HCT116 (cell line): ENCODE measurements at regions of chr12 and their contacts with region 1.

Region 1: DNA sequence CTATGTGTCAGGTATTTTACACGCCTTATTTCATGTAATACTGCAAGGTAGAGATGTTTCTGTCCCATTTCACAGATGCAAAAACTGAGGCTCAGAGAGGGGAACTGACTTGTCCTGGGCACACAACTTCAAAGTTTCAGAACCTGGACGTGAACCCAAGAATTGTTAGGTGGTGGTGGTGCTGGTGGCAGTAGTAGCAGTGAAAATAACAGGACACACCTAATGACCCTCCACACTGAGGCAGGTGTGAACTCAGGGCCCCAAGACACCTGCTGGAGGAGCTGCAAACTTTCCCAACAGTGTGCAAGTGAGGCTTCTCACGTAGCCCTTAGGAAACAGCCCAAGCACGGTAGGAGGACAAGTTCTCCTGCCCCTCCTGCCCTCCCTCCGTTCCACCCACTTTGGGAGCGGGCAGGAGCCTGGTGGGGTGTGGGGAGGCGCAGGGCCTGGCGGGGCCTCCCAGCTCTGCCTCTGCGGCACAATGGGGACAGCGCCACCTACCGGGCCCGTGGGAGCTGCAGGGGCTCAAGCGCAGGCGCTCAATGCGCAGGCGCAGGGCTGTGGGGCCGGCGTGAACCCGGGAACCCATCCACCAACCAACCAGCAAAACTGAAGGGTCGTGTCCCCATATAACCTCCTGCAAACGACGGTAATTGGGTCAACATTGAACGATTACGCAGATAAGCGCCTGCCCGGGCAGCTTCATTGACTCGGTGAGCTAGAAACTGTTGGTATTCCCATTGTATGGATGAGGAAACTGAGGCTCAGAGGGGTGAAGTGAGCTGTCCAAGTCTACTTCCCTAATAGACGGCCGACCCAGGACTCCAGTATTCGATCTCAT is 12.0 kb upstream of the TRPV4 start:
- DNase-seq: peak; percentile 73
- ATAC-seq: peak; percentile 92
- H3K4me3 ChIP-seq: no peak overlapping the region
- H3K27ac ChIP-seq: no peak overlapping the region
- H3K4me1 ChIP-seq: peaks cover 12 to 21% of the 10 kb centered on the region in 2 experiments; a peak in 3 of 4 replicates
- H3K27me3 ChIP-seq: no peaks in the 10 kb centered on the region
- CTCF ChIP-seq: peak; percentile 97 to 98 (median 98)
- POLR2A ChIP-seq: no peak
- RAD21 ChIP-seq: peak; percentile 94

Region 2: DNA sequence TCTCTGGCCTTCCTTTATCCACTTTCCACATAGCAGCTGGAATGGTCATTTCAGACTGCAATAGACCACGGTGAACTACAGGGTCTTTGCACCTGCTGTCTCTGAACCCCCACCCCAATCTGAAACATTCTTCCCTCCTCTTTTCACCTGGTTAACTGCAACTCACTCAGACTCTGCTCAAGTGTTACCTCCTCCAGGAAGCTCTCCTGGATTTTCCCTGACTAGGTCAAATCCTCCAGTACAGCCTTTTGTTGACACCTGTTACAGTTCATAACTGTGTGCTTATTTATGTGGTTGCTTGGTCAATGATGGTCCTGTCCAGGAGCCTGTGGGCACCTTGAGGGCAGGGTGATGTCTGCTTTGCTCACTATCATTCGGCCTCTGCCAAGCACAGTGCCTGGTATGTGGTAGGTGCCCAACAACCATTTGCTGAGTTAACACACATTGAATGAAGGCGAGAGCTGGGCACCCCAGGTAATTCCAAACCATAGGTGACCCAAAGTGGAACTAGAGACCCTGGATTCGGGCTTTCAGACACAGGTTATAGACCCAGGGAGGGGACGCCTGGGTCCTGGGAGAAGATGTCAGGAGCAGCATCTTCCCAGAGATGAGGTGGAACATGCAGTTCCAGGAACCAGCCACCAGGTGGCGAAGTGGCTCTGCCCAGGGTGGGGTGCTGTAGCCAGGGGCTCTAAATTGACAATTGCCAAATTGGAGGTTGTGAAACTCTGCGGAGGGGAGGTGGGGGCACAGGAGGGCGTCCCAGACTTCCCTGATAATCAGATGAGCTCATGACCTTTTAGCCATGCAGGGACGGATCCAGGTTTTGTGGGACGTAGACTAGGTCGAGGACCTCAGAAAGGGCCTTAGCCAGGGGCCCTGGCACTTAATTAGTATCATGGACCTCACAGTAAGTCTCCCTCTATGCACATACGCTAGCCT is 40.1 kb before region 1 on chr12:
- CTCF ChIA-PET with region 1: interaction called, 19 read pairs
- POLR2A ChIA-PET with region 1: no interaction called
- RAD21 ChIA-PET with region 1: no interaction called
- intact Hi-C with region 1: loop called (anchors 1 kb)
- DNase-seq: peak; percentile 15
- ATAC-seq: peak; percentile 95
- H3K4me3 ChIP-seq: no peak overlapping the region
- H3K27ac ChIP-seq: no peak overlapping the region
- H3K4me1 ChIP-seq: no peaks in the 10 kb centered on the region
- H3K27me3 ChIP-seq: no peaks in the 10 kb centered on the region
- CTCF ChIP-seq: peak; percentile 94 to 98 (median 96)
- POLR2A ChIP-seq: no peak
- RAD21 ChIP-seq: peak; percentile 92

Region 3: DNA sequence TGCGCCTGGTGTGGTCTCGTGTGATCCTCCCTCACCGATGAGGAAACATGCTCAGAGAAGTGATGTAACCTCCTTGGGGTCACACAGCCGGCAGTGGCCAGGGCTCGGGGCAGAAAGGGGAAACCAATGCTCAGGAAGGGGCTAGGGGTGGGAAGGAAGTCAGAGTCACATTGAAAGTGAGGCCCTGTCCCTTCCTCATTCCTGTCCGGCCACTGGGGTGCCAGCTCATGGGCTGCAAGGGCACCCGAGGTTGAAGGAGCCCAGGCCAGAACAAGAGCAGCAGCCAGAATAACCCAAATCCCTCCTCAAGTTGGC is 17.0 kb before region 1 on chr12:
- CTCF ChIA-PET with region 1: interaction called, 10 read pairs
- POLR2A ChIA-PET with region 1: no interaction called
- RAD21 ChIA-PET with region 1: no interaction called
- intact Hi-C with region 1: no loop called
- DNase-seq: no peak
- ATAC-seq: no peak
- H3K4me3 ChIP-seq: no peak overlapping the region
- H3K27ac ChIP-seq: no peak overlapping the region
- H3K4me1 ChIP-seq: peaks cover under 1 to 5% of the 10 kb centered on the region in 2 experiments; a peak in 3 of 4 replicates
- H3K27me3 ChIP-seq: no peaks in the 10 kb centered on the region
- CTCF ChIP-seq: no peak
- POLR2A ChIP-seq: no peak
- RAD21 ChIP-seq: no peak

Region 4: GRCh38 chr12:109858764-109859163 is 13.6 kb after region 1 on chr12:
- CTCF ChIA-PET with region 1: interaction called, 14 read pairs
- POLR2A ChIA-PET with region 1: no interaction called
- RAD21 ChIA-PET with region 1: no interaction called
- intact Hi-C with region 1: no loop called
- DNase-seq: no peak
- ATAC-seq: no peak
- H3K4me3 ChIP-seq: no peak overlapping the region
- H3K27ac ChIP-seq: no peak overlapping the region
- H3K4me1 ChIP-seq: no peaks in the 10 kb centered on the region
- H3K27me3 ChIP-seq: no peaks in the 10 kb centered on the region
- CTCF ChIP-seq: no peak
- POLR2A ChIP-seq: no peak
- RAD21 ChIP-seq: no peak

Region 5: GRCh38 chr12:109863847-109864712 is 18.9 kb after region 1 on chr12:
- CTCF ChIA-PET with region 1: interaction called, 11 read pairs
- POLR2A ChIA-PET with region 1: no interaction called
- RAD21 ChIA-PET with region 1: no interaction called
- intact Hi-C with region 1: no loop called
- DNase-seq: no peak
- ATAC-seq: no peak
- H3K4me3 ChIP-seq: no peak overlapping the region
- H3K27ac ChIP-seq: no peak overlapping the region
- H3K4me1 ChIP-seq: 0 out of 4 replicates have a peak, but pooled peaks cover 0 to 5% of the 10 kb centered on the region in 2 experiments
- H3K27me3 ChIP-seq: no peaks in the 10 kb centered on the region
- CTCF ChIP-seq: no peak
- POLR2A ChIP-seq: no peak
- RAD21 ChIP-seq: no peak

Region 6: DNA sequence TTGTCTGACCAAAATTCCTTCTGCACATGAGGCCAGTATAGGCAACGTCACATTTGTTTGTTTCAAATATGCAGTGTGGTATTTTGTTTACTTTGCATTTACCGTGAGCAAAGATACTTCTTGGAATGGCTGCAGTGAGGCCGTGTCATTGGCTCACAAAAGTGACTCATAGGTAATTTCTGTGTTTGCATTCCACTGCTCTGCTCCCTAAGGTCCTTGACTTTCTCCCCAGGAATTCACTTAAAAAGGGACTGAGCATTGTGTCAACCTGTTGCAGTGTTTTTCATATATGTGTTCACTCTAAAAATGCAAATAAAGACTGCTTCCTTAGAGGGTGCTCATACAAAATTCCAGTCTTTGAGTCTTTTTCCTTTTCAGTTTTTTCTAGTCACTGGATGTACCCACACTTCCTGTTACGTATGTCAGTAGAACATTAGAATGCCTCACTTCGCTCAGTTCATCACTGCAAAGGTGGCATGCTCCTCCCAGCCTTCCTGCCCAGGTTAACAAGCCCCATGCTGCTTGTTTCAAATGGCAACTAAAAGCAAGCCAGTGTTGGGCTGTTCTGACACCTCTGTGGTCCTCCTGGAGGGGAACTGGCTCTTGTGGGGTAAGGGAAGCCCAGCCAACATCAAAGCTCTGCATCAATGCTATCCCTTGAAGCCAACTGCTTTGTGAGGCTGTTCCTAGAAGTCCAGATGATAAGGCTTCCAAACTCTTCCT is 194.0 kb after region 1 on chr12:
- CTCF ChIA-PET with region 1: interaction called, 3 read pairs
- POLR2A ChIA-PET with region 1: no interaction called
- RAD21 ChIA-PET with region 1: no interaction called
- intact Hi-C with region 1: loop called (anchors 5 kb)
- DNase-seq: no peak
- ATAC-seq: peak; percentile 68
- H3K4me3 ChIP-seq: no peak overlapping the region
- H3K27ac ChIP-seq: peak overlapping the region; percentile 35; the same call in 1 of the 2 replicates
- H3K4me1 ChIP-seq: peaks cover 12 to 19% of the 10 kb centered on the region in 2 experiments
- H3K27me3 ChIP-seq: no peaks in the 10 kb centered on the region
- CTCF ChIP-seq: no peak
- POLR2A ChIP-seq: no peak
- RAD21 ChIP-seq: no peak

Region 7: DNA sequence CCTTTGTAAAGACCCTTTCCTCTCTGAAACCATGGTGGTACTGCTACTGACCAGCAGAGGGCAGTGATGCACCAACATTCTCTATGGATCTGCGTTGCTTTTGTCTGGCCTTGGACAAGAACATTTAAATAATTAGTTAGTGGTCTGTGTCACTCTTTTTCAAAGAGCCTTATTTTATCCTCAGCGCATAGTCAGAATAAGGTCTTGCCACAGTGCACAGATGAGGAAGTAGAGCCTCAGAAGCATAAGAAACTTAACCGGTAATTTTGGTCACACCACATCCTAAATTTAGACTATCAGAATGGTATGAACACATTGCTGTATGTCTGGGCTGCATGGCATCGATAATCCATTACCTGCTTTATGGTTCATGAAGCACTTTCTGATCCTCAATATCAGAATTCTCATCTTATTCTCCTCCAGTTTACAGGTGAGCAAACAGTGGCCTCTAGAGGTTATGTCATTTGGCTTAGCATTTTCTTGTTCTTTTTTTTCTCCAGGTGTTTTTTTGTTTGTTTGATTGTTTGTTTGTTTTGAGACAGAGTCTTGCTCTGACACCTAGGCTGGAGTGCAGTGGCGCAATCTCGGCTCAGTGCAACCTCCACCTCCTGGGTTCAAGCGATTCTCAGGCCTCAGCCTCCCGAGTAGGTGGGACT is 255.2 kb after region 1 on chr12:
- CTCF ChIA-PET with region 1: interaction called, 4 read pairs
- POLR2A ChIA-PET with region 1: no interaction called
- RAD21 ChIA-PET with region 1: no interaction called
- intact Hi-C with region 1: loop called (anchors 5 kb)
- DNase-seq: peak; percentile 48
- ATAC-seq: peak; percentile 74
- H3K4me3 ChIP-seq: no peak overlapping the region
- H3K27ac ChIP-seq: no peak overlapping the region
- H3K4me1 ChIP-seq: peaks cover 0 to 5% of the 10 kb centered on the region in 2 experiments; a peak in 2 of 4 replicates
- H3K27me3 ChIP-seq: no peaks in the 10 kb centered on the region
- CTCF ChIP-seq: peak; percentile 89 to 96 (median 93)
- POLR2A ChIP-seq: no peak
- RAD21 ChIP-seq: peak; percentile 93